BJ (cell line): ENCODE measurements at regions of chr7 and their contacts with region 1.

Region 1: DNA sequence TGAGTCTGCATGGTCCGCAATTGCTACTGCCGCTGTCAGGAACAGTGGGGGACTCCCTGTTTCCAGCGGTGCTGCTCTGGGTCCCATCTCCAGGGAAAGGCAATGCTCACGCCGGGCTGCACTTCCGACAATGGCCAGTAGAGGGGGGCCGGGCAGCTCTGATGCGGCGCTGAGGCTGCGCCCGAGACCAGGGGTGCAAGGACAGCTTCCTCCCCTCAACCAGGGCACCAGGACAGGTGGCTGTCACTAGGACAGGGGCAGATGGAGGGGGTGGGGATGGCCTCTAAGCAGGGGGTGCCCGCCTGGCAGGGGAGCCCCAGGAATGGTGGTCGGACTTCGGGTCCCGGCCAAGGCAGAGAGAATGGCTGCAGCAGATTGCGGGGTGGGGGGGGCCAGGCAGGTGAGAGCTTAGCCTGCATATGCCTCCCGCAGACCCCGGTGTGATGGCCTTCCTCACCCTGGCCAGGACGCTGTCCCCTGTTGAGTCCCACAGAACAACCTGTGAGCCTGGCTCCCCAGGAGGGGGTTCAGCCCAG is 71.0 kb upstream of the KCTD7 start:
- DNase-seq: no peak
- H3K4me3 ChIP-seq: no peak overlapping the region
- H3K27me3 ChIP-seq: no peaks in the 10 kb centered on the region
- CTCF ChIP-seq: peak; percentile 98

Region 2: GRCh38 chr7:66571568-66571967 is 13.9 kb after region 1 on chr7:
- CTCF ChIA-PET with region 1: interaction called, 21 read pairs
- POLR2A ChIA-PET with region 1: no interaction called
- DNase-seq: no peak
- H3K4me3 ChIP-seq: no peak overlapping the region
- H3K27me3 ChIP-seq: no peaks in the 10 kb centered on the region
- CTCF ChIP-seq: no peak

Region 3: GRCh38 chr7:66586181-66586580 is 28.5 kb after region 1 on chr7:
- CTCF ChIA-PET with region 1: interaction called, 13 read pairs
- POLR2A ChIA-PET with region 1: no interaction called
- DNase-seq: no peak
- H3K4me3 ChIP-seq: no peak overlapping the region
- H3K27me3 ChIP-seq: no peaks in the 10 kb centered on the region
- CTCF ChIP-seq: no peak